ENCODE measurements at regions of chr13 and their contacts with region 1.

Region 1: GRCh38 chr13:49300739-49301589 is 53.2 kb downstream of the CDADC1 start:
- DNase-seq: peak; percentile 60 to 66
- ATAC-seq: peak; percentile 82 to 95
- H3K4me3 ChIP-seq: 0 out of 3 replicates have a peak overlapping the region, but pooled peaks have one; percentile 30
- H3K27ac ChIP-seq: peak overlapping the region; percentile 61 to 76; a peak in 5 of 6 replicates
- H3K4me1 ChIP-seq: no peaks in the 10 kb centered on the region
- CTCF ChIP-seq: peak; percentile 75
- EP300 ChIP-seq: no peak
- POLR2A ChIP-seq: no peak
- RAD21 ChIP-seq: peak; percentile 83 to 89

Region 2: GRCh38 chr13:49314344-49314882 is 13.4 kb after region 1 on chr13:
- CTCF ChIA-PET with region 1: interaction called, 15 read pairs
- POLR2A ChIA-PET with region 1: no interaction called
- DNase-seq: no peak
- ATAC-seq: no peak; a peak in 1 of 6 replicates
- H3K4me3 ChIP-seq: no peak overlapping the region
- H3K27ac ChIP-seq: peak overlapping the region; percentile 63 to 86
- H3K4me1 ChIP-seq: peaks cover 13% of the 10 kb centered on the region
- CTCF ChIP-seq: no peak
- EP300 ChIP-seq: no peak
- POLR2A ChIP-seq: no peak
- RAD21 ChIP-seq: no peak

Region 3: DNA sequence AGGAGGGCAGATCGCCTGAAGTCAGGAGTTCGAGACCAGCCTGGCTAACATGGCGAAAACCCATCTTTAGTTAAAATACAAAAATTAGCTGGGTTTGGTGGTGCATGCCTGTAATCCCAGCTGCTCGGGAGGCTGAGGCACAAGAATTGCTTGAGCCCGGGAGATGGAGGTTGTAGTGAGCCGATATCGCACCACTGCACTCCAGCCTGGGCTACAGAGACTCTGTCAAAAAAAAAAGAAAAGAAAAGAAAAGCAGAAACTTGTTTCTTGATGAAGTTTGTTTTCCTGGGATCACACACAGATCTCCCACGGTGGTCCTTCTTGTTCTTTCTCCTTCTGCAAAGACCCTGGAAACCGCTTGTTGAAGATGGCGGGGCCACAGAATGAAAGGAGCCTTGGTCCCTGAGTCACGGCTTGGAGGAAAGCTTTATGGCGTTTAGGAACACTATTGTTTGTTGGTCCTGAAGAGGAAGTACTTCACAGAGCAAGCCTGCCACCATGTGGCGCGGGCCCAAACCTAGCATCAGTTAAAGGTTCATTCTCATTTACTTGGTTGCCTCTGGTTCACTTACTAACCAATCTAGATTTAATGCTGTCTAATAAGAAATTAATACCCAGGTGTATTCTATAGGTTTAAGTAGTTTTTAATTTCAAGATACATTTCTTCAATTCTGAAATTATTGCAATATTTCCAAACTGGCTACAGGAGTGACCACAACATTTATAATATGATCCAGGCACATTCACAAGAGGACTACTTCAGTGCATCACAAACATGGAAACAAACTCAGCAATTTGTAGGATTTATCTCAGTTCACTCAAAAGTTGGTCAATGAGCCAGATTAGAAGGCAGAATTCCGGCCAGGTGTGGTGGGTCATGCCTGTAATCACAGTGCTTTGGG is 306.0 kb after region 1 on chr13:
- CTCF ChIA-PET with region 1: interaction called, 45 read pairs
- POLR2A ChIA-PET with region 1: no interaction called
- DNase-seq: peak; percentile 68 to 87
- ATAC-seq: peak; percentile 100
- H3K4me3 ChIP-seq: peak overlapping the region; percentile 45
- H3K27ac ChIP-seq: peak overlapping the region; percentile 67 to 82
- H3K4me1 ChIP-seq: no peaks in the 10 kb centered on the region
- CTCF ChIP-seq: peak; percentile 81
- EP300 ChIP-seq: no peak
- POLR2A ChIP-seq: no peak
- RAD21 ChIP-seq: peak; percentile 87 to 89